ENCODE measurements at regions of chr11 and their contacts with region 1.

Region 1: DNA sequence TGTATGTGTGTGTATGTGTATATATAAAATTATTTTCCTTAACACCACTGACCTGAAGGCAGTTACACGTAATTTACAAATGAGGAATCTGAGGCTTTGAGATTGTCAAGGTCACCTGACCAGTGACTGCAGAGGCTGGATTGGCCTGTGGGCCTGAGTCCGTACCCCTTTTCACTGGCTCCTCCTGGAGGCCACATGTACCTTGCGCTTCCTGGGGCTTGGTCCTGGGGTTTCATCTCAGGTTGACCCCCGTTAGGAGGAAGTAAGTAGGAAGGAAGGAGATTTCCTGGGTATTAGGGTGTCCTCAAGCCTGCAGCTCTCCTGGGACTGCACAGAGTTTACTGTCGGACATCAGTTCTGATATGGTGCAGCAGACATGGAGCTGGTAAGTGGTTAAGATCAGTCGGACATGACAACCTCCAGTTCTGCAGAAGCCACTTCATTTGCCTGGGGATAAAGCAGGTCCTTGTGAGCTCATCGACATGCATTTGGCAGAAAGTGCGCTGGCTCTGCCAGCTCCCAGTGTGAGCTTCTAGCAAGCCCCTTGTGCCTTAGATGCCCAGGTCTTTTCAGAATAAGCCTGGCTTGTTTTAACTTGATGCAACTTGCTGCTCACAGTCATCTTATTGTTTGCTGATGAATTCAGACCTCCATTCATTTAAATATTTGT is 36.6 kb downstream of the ST3GAL4 start:
- DNase-seq: peak in 1 of 9 experiments; percentile 24
- ATAC-seq: no peak
- H3K4me3 ChIP-seq: no peak overlapping the region
- H3K4me3 Mint-ChIP-seq: no peak overlapping the region
- H3K27ac ChIP-seq: no peak overlapping the region
- H3K27ac Mint-ChIP-seq: no peak overlapping the region
- H3K4me1 ChIP-seq: no peaks in the 10 kb centered on the region
- H3K4me1 Mint-ChIP-seq: peaks cover 2% of the 10 kb centered on the region
- H3K27me3 ChIP-seq: no peaks in the 10 kb centered on the region
- H3K27me3 Mint-ChIP-seq: no peaks in the 10 kb centered on the region
- CTCF ChIP-seq: no peak

Region 2: GRCh38 chr11:126163074-126163700 is 228.9 kb before region 1 on chr11:
- CTCF ChIA-PET with region 1: no interaction called
- POLR2A ChIA-PET with region 1: no interaction called
- intact Hi-C with region 1: loop called in 1 of 2 experiments (anchors 10 kb)
- DNase-seq: no peak
- ATAC-seq: no peak
- H3K4me3 ChIP-seq: no peak overlapping the region
- H3K4me3 Mint-ChIP-seq: no peak overlapping the region
- H3K27ac ChIP-seq: no peak overlapping the region
- H3K27ac Mint-ChIP-seq: no peak overlapping the region
- H3K4me1 ChIP-seq: no peaks in the 10 kb centered on the region
- H3K4me1 Mint-ChIP-seq: no peaks in the 10 kb centered on the region
- H3K27me3 ChIP-seq: no peaks in the 10 kb centered on the region
- H3K27me3 Mint-ChIP-seq: peaks cover 2% of the 10 kb centered on the region
- CTCF ChIP-seq: no peak